Activated CD4-positive, alpha-beta memory T cell treated with anti-CD3 and anti-CD28 coated beads for 36 hours (primary cell): ENCODE measurements at regions of chr1 and their contacts with region 1.

Region 1: DNA sequence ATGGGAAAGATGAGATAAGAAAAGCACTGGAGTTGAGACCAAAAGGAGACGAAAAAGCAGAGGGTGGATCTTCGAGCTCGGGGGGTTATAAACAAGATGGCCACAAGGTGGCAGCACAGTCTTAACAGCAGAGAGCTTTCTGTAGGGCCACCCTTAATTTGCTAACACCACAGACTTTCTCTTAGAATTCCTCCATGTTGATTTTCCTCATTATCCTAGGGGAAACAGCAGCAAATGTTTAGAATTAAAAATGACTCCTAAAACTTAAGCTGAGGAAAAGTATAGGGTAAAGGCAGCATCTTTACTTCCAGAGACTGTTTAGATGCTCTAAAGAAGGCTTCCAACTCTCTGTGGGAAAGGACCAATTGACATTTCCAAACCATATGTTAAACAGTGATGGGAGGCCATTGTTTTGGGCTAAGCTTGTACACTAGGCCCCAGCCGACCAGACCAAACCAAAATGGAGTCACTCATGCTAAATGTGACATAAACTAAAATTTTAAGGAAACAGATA is 2.5 kb upstream of the APOBEC4 start:
- DNase-seq: peak; percentile 81
- H3K4me3 Mint-ChIP-seq: no peak overlapping the region
- H3K27ac Mint-ChIP-seq: no peak overlapping the region
- H3K4me1 Mint-ChIP-seq: peaks cover 33% of the 10 kb centered on the region
- H3K27me3 Mint-ChIP-seq: no peaks in the 10 kb centered on the region

Region 2: GRCh38 chr1:182029379-182030331 is 1626.0 kb before region 1 on chr1:
- CTCF ChIA-PET with region 1: no interaction called
- POLR2A ChIA-PET with region 1: no interaction called
- intact Hi-C with region 1: loop called (anchors 10 kb)
- DNase-seq: peak; percentile 99
- H3K4me3 Mint-ChIP-seq: peak overlapping the region; percentile 88
- H3K27ac Mint-ChIP-seq: peak overlapping the region; percentile 92
- H3K4me1 Mint-ChIP-seq: peaks cover 13% of the 10 kb centered on the region
- H3K27me3 Mint-ChIP-seq: no peaks in the 10 kb centered on the region

Region 3: DNA sequence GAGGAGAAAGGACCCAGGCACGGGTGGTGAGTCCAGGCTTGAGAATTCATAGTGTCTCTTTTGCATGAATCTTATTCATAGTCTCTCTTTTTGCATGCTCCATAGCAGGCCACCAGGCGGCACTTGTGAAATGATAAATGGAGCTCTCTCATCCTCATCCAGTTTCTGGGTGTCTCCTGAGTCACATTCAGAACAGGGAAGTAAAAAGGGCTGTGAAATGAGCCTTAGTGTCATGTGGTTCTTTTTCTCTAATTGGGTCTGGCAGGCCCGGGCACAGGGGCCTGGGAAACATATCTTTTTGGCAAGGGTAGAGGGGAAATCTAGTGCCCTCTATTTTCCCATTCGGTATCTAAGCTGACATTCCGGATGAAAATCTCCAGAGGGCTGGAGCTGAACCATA is 46.3 kb before region 1 on chr1:
- CTCF ChIA-PET with region 1: no interaction called
- POLR2A ChIA-PET with region 1: no interaction called
- intact Hi-C with region 1: no loop called
- DNase-seq: peak; percentile 34
- H3K4me3 Mint-ChIP-seq: no peak overlapping the region
- H3K27ac Mint-ChIP-seq: no peak overlapping the region
- H3K4me1 Mint-ChIP-seq: no peaks in the 10 kb centered on the region
- H3K27me3 Mint-ChIP-seq: peaks cover 2% of the 10 kb centered on the region

Region 4: GRCh38 chr1:183670178-183670577 is 14.6 kb after region 1 on chr1:
- CTCF ChIA-PET with region 1: interaction called, 16 read pairs
- POLR2A ChIA-PET with region 1: no interaction called
- intact Hi-C with region 1: no loop called
- DNase-seq: no peak
- H3K4me3 Mint-ChIP-seq: no peak overlapping the region
- H3K27ac Mint-ChIP-seq: no peak overlapping the region
- H3K4me1 Mint-ChIP-seq: no peaks in the 10 kb centered on the region
- H3K27me3 Mint-ChIP-seq: peaks cover 2% of the 10 kb centered on the region

Region 5: DNA sequence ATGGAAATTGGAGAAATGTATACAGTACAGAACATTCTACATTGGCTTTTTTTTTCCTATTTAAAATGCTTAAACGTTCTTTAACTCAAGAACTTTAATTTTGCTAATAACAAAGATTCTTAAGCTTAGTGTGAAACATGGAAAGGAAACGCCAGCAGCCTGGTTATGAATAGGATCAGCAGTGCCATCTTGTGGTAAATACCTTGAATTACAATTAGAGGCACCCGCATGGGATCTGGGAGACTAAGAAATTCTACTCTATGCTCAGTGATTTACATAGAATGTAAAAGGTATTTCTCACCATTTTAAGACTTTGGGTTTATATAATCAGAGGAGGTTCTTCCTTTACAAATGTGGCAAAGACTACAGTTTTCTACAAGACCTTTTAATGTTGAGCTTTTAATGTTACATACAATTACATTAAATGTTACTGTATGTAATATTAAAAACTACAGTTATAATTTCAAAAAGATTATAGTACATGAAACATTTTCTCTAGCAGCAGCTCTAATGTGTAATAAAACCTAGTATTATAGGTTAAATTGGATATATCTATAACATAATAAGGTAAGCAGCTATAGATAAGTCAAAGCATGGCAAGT is 29.6 kb after region 1 on chr1:
- CTCF ChIA-PET with region 1: interaction called, 124 read pairs
- POLR2A ChIA-PET with region 1: no interaction called
- intact Hi-C with region 1: loop called (anchors 1 kb)
- DNase-seq: peak; percentile 23
- H3K4me3 Mint-ChIP-seq: no peak overlapping the region
- H3K27ac Mint-ChIP-seq: no peak overlapping the region
- H3K4me1 Mint-ChIP-seq: peaks cover 2% of the 10 kb centered on the region
- H3K27me3 Mint-ChIP-seq: peaks cover 3% of the 10 kb centered on the region

Region 6: GRCh38 chr1:183956559-183957188 is 301.1 kb after region 1 on chr1:
- CTCF ChIA-PET with region 1: interaction called, 12 read pairs
- POLR2A ChIA-PET with region 1: interaction called, 3 read pairs
- intact Hi-C with region 1: loop called (anchors 1 kb)
- DNase-seq: peak; percentile 72
- H3K4me3 Mint-ChIP-seq: no peak overlapping the region
- H3K27ac Mint-ChIP-seq: no peak overlapping the region
- H3K4me1 Mint-ChIP-seq: peaks cover 17% of the 10 kb centered on the region
- H3K27me3 Mint-ChIP-seq: no peaks in the 10 kb centered on the region

Region 7: DNA sequence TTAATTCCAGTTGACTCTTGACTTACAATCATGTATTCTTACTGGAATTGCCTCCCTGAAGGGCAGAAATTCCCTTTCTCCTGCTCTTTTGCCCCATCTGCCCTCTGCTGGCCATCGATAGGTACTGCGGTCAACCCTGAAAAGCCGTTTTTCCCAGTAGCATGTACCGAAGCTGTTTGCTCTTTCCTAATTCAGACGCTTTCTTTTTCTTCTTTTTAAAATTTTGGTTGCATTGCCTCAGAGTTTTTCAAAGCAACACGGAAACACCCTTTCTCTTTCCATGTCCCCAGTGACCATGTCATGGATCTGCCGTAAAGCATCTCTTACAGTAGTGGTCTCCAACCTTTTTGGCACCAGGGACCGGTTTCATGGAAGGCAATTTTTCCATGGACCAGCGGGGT is 567.0 kb after region 1 on chr1:
- CTCF ChIA-PET with region 1: interaction called, 4 read pairs
- POLR2A ChIA-PET with region 1: no interaction called
- intact Hi-C with region 1: loop called (anchors 2 kb)
- DNase-seq: peak; percentile 47
- H3K4me3 Mint-ChIP-seq: no peak overlapping the region
- H3K27ac Mint-ChIP-seq: no peak overlapping the region
- H3K4me1 Mint-ChIP-seq: no peaks in the 10 kb centered on the region
- H3K27me3 Mint-ChIP-seq: no peaks in the 10 kb centered on the region